Activated CD8-positive, alpha-beta T cell treated with anti-CD3 and anti-CD28 coated beads for 36 hours (primary cell): ENCODE measurements at regions of chr20 and their contacts with region 1.

Region 1: GRCh38 chr20:33313686-33314314 is 30.8 kb downstream of the BPIFB1 start:
- DNase-seq: no peak
- ATAC-seq: no peak
- H3K4me3 Mint-ChIP-seq: no peak overlapping the region
- H3K27ac Mint-ChIP-seq: no peak overlapping the region
- H3K4me1 Mint-ChIP-seq: no peaks in the 10 kb centered on the region
- H3K27me3 Mint-ChIP-seq: no peaks in the 10 kb centered on the region
- CTCF ChIP-seq: no peak

Region 2: DNA sequence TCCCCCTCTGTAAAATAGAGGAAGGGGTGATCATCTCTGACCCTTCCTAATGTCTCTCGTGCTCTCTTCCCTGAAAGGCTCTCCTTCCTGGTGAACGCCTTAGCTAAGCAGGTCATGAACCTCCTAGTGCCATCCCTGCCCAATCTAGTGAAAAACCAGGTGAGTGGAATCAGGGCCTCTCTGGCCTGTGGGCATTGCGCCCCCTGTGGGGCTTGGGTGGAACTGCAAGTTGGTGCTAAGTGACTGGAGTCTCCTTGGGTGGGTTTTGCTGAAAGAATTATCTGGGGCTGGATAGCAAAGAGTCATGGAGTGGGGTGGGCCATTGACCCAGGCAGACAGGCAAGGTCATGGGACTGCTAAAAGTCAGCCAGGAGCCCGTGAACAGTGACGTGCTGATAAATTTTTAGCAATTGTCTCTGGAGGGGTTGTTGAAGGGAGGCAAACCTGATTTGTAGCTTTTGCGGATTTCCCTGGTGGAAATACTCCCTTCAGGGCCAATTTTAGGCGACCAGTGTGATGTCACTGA is 21.9 kb before region 1 on chr20:
- CTCF ChIA-PET with region 1: interaction called, 12 read pairs
- POLR2A ChIA-PET with region 1: no interaction called
- intact Hi-C with region 1: no loop called
- DNase-seq: peak; percentile 78
- ATAC-seq: peak; percentile 60
- H3K4me3 Mint-ChIP-seq: no peak overlapping the region
- H3K27ac Mint-ChIP-seq: no peak overlapping the region
- H3K4me1 Mint-ChIP-seq: no peaks in the 10 kb centered on the region
- H3K27me3 Mint-ChIP-seq: no peaks in the 10 kb centered on the region
- CTCF ChIP-seq: peak; percentile 99

Region 3: DNA sequence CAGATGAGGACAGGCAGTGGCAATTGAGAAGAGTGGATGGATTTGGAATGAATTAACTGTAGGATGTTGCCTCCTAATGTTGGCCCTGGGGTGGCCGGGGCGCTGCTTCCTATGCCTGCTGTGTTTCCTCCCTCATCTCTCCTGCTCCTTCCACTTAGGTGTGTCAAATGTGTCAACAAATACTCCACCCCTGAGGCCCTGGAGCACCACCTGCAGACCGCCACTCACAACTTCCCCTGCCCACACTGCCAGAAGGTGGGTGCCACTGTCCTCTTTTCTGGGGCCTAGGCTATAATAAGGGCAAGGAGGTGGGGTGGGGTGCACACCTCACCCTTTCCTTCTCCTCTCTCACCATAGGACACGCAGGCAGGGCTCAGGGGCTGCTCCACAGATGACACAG is 467.3 kb after region 1 on chr20:
- CTCF ChIA-PET with region 1: no interaction called
- POLR2A ChIA-PET with region 1: no interaction called
- intact Hi-C with region 1: no loop called
- DNase-seq: no peak
- ATAC-seq: no peak
- H3K4me3 Mint-ChIP-seq: no peak overlapping the region
- H3K27ac Mint-ChIP-seq: no peak overlapping the region
- H3K4me1 Mint-ChIP-seq: peaks cover 21% of the 10 kb centered on the region
- H3K27me3 Mint-ChIP-seq: no peaks in the 10 kb centered on the region
- CTCF ChIP-seq: no peak